K562 (cell line): ENCODE measurements at regions of chr7 and their contacts with region 1.

Region 1: DNA sequence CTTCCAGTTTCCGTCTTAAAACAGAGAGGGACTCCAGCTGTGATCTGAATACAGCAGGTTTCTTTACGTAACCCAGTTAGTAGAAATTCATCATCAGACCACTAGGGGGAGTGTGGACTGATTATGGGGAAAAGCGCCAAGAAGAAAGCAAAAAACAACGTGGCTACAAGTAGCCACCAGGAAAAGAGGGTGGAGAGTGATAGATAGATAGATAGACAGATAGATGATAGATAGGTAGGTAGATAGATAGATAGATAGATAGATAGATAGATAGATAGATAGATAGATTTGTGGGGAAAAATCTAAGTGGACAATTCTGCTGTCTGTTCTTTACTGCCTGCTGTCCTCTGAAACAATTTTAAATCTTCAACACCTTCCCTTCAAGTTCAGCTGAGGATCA is 12.7 kb upstream of the AKR1B10 start:
- DNase-seq: peak; percentile 76 to 82 (median 81)
- ATAC-seq: peak; percentile 86
- H3K4me3 ChIP-seq: no peak overlapping the region
- H3K27ac ChIP-seq: no peak overlapping the region
- H3K4me1 ChIP-seq: no peaks in the 10 kb centered on the region
- H3K27me3 ChIP-seq: peaks cover 4 to 24% of the 10 kb centered on the region in 2 experiments; a peak in 4 of 5 replicates
- CTCF ChIP-seq: peak; percentile 84 to 88 (median 84)
- EP300 ChIP-seq: no peak
- POLR2A ChIP-seq: no peak
- RAD21 ChIP-seq: peak; percentile 54 to 64

Region 2: DNA sequence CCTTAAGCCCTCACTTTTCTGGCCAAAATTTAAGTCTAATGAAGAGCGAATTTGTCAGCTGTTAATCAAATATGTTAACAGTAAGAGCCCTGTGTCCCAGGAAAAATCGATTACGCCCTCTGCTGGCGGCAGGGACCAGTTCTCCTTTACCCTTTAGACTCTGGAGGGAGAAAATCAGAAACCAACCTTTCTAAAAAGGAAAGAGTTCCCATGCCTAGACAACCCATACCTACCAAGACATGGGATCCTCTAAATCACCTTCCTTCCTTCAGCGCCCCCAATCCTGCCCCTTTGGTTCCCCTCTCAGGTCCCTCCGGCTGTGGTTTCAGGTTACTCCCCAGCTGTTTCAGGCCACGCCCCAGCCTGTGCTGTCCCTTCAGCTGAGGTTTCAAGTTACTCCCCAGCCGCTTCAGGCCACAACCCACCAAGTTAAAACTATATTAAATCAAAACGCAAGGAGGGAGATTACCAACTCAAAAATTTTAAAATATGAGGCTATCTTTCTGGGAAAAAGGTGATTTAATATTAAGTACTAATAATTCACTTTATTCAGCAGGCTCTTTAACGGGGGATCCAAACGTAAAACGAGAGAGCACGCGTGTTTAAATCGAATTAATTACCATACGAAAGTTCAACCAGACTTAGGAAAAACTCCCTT is 32.9 kb after region 1 on chr7:
- CTCF ChIA-PET with region 1: interaction called, 9 read pairs
- POLR2A ChIA-PET with region 1: interaction called, 3 read pairs
- in situ Hi-C with region 1: no loop called
- intact Hi-C with region 1: loop called (anchors 2 kb)
- DNase-seq: peak; percentile 77 to 84 (median 80)
- ATAC-seq: peak; percentile 98
- H3K4me3 ChIP-seq: no peak overlapping the region
- H3K27ac ChIP-seq: no peak overlapping the region
- H3K4me1 ChIP-seq: 0 out of 5 replicates have a peak, but pooled peaks cover 0 to 2% of the 10 kb centered on the region in 2 experiments
- H3K27me3 ChIP-seq: peaks cover 34 to 44% of the 10 kb centered on the region in 2 experiments
- CTCF ChIP-seq: peak; percentile 82 to 98 (median 93)
- EP300 ChIP-seq: no peak
- POLR2A ChIP-seq: no peak
- RAD21 ChIP-seq: peak; percentile 35 to 60; a peak in 3 of 4 replicates

Region 3: DNA sequence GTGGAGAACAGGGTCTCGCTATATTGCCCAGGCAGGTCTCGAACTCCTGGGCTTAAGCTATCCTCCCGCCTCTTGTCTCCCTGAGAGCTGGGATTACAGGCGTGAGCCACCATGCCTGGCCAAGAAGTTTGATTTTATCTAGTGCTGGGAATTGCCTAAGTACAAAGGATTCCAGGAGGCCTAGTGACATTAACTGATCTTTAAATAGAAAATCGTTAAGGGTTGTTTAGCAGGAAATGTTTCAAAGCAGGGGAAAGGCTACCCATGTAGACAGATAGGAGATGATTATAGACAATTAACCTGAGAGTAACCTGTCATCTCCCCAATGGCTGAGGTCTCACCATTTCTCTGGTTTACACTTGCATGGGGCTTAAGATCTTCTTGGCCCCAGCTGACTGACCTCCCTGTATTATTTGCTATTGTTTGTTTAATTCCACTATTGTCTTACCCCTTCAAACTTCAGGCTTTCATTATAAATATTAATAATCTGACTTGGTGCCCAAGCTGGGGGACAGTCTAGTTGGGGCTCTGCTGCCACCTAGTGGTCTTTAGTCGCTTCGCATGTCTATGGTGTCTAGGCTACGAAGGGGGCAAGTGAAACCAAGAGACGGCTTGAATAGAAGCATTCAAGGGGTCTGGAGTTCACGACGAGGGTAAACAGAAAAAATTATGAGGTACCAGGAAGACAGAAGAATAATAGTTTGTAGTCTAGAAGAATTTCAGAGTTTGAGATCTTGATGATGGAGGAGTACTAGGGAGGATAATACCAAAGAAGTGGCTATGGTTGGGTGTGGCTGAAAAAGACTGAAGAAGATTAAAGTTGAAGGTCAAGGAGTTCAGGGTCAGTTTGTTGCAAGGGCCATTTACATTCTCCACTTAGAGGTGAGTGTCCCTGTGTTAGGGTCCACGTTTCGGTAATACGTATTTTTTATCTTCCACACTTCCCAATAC is 91.6 kb after region 1 on chr7:
- CTCF ChIA-PET with region 1: interaction called, 17 read pairs
- POLR2A ChIA-PET with region 1: no interaction called
- in situ Hi-C with region 1: no loop called
- intact Hi-C with region 1: loop called (anchors 1 kb)
- DNase-seq: peak; percentile 73 to 87 (median 81)
- ATAC-seq: peak; percentile 98
- H3K4me3 ChIP-seq: no peak overlapping the region
- H3K27ac ChIP-seq: no peak overlapping the region
- H3K4me1 ChIP-seq: no peaks in the 10 kb centered on the region
- H3K27me3 ChIP-seq: peaks cover 9 to 21% of the 10 kb centered on the region in 2 experiments
- CTCF ChIP-seq: peak; percentile 90 to 97 (median 95)
- EP300 ChIP-seq: no peak
- POLR2A ChIP-seq: no peak
- RAD21 ChIP-seq: peak; percentile 83 to 85

Region 4: GRCh38 chr7:134710859-134711624 is 196.4 kb after region 1 on chr7:
- CTCF ChIA-PET with region 1: no interaction called
- POLR2A ChIA-PET with region 1: no interaction called
- in situ Hi-C with region 1: no loop called
- intact Hi-C with region 1: loop called (anchors 10 kb)
- DNase-seq: no peak
- ATAC-seq: no peak; the same call in 2 of the 3 replicates
- H3K4me3 ChIP-seq: no peak overlapping the region
- H3K27ac ChIP-seq: no peak overlapping the region
- H3K4me1 ChIP-seq: no peaks in the 10 kb centered on the region
- H3K27me3 ChIP-seq: peaks cover 20 to 27% of the 10 kb centered on the region in 2 experiments; a peak in 4 of 5 replicates
- CTCF ChIP-seq: no peak
- EP300 ChIP-seq: no peak
- POLR2A ChIP-seq: no peak
- RAD21 ChIP-seq: no peak

Region 5: GRCh38 chr7:134875867-134876266 is 361.2 kb after region 1 on chr7:
- CTCF ChIA-PET with region 1: interaction called, 11 read pairs
- POLR2A ChIA-PET with region 1: no interaction called
- in situ Hi-C with region 1: no loop called
- intact Hi-C with region 1: no loop called
- DNase-seq: no peak
- ATAC-seq: no peak
- H3K4me3 ChIP-seq: no peak overlapping the region
- H3K27ac ChIP-seq: no peak overlapping the region
- H3K4me1 ChIP-seq: no peaks in the 10 kb centered on the region
- H3K27me3 ChIP-seq: peaks cover 13 to 23% of the 10 kb centered on the region in 2 experiments; a peak in 4 of 5 replicates
- CTCF ChIP-seq: no peak
- EP300 ChIP-seq: no peak
- POLR2A ChIP-seq: no peak
- RAD21 ChIP-seq: no peak